ENCODE measurements at regions of chr22 and their contacts with region 1.

Region 1: DNA sequence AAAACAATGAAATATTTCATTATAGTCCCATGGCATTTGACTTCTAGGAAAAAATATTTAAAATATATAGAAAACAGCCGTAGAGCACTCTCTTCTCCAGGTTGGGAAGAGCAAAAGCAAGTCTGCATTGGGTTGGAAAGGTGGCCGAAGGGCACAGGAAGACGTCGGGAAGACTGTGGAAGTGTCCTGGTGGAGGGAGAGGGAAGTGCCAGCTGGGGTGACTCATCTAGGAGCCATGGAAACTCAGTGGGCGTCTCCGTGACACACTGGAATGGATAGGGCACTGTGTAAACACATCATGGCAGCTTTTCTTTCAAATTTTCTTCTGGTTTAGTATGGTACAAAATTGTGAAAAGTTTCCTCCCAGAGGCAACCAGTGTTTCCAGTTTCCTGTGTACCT is 12.7 kb downstream of the GTPBP1 start:
- DNase-seq: peak; percentile 81 to 89
- ATAC-seq: peak; percentile 88
- H3K4me3 ChIP-seq: no peak overlapping the region
- H3K27ac ChIP-seq: peak overlapping the region in 1 of 2 donors; percentile 10
- H3K4me1 ChIP-seq: no peaks in the 10 kb centered on the region
- H3K27me3 ChIP-seq: no peaks in the 10 kb centered on the region

Region 2: DNA sequence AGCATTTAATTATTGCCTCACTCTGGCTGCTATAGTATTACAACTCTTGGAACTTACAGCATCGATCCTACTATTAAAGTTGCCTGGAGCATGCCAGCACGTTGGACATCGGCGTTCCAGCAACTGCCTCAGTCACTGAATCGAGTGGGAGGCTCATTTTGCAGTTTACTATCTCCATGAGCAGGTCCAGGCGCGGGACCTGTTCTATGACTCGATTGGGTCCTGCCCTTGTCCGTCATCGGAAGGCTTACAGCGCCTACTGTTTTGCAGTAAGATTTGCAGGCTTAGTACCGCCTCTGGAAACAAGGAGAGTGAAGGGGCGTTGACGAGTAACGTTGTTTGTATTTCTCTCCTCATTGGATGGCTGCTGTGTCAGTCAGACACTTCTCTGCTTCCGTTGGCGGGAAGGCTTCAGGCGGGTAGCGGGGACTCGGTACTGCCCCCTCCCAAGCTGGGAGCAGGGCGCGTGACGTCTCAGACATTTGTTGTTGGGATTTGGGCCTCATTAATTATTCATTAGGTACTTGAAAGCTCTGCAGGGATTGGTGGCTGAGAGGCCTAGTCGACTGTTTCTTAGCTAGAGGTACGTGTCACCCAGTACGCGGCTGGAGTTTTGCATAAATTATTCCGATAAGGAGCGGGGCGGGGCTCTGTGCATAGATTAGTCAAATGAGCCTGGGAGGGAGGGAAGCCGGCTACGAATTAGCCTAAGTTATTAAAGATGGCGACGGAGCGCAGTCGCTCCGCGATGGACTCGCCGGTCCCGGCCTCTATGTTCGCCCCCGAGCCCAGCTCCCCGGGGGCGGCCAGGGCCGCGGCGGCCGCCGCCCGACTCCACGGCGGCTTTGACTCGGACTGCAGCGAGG is 12.9 kb before region 1 on chr22 and contains the start of gene GTPBP1:
- intact Hi-C with region 1: loop called in 1 of 2 experiments (anchors 1 kb)
- DNase-seq: peak; percentile 97 to 99
- ATAC-seq: peak; percentile 95
- H3K4me3 ChIP-seq: peak within 1 kb of the TSS; percentile 94
- H3K27ac ChIP-seq: peak within 1 kb of the TSS; percentile 87 to 91
- H3K4me1 ChIP-seq: peaks cover 0 to 8% of the 10 kb centered on the region in 2 donors
- H3K27me3 ChIP-seq: no peaks in the 10 kb centered on the region
- total RNA-seq, gene GTPBP1: 49.5 to 59.2 TPM

Measured in aorta (tissue), 5 donors.